ENCODE measurements at regions of chr20 and their contacts with region 1.

Region 1: GRCh38 chr20:35702051-35702823 is 3.0 kb downstream of the ROMO1 start:
- DNase-seq: no peak
- ATAC-seq: no peak

Region 2: DNA sequence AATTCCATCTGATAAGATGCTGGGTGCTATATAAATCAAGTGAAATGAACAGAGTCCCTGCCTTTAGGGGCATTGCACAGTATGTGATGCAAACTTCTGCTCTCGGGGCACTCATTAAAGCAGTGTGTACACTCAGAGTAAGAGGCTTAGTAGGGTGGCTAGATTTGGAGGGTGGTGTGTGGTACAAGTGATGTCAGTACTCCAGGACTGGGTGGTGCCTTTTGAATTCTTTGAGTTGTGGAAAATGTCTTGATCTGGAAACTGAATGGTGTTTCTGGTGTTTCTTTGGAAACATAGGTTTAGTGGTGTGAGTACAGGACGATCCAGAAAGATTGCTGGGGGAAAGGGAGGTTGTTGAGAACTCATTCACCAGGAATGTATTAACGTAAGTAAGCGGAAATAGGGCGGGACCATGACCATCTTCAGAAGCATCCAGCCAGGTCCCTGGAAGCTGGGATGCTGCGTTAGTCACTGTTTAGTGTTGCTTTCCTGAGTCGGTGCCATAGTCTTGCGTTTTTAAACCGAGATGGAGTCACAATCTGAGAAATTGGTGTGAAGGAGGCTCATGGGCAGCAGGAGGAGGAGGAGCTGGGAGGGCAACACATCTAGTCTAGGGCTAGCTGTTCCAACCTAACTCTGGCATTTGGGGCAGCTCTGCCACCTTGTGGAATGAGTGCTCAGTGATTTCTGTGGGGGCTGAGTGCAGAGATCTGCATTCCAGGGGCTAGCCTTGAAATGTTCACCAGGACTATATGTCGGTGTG is 181.7 kb after region 1 on chr20:
- intact Hi-C with region 1: loop called (anchors 10 kb)
- DNase-seq: peak; percentile 79
- ATAC-seq: peak; percentile 84 to 90